ENCODE measurements at regions of chr10 and their contacts with region 1.

Region 1: GRCh38 chr10:25101461-25102146 is 73.2 kb upstream of the GPR158 start:
- DNase-seq: no peak
- ATAC-seq: no peak

Region 2: DNA sequence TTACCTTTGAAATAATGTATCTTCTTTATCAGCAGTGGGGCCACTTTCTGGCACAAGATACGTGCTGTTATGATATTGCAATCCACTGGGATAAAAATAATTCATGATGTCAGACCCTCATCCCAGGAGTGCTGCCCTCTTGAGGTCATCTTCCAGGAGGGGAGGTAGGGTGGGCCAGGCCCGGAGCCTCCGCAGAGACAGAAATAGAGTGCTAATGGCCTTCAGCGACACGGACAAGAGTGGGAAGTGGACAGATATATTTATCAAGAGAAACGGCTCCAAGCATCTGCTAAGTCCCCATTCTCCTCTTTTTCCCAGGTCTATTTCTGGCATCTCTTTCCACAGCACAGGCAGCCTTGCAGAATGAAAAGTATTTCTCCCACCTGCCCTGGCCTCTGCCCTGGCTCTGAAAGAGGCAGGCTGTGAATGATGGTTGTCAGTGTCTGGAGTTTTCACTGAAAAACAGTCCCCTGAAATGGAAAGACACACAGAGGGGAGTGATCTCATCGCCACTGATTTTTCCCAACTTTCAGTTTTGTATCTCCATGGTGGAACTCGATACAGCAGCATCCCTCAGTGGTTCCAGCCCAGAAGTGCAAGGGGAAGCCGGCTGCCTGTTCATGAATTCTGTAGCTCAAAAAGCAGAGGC is 580.7 kb after region 1 on chr10:
- intact Hi-C with region 1: loop called in 1 of 2 experiments (anchors 10 kb)
- DNase-seq: peak; percentile 31
- ATAC-seq: peak; percentile 92 to 93